K562 (cell line): ENCODE measurements at regions of chr6 and their contacts with region 1.

Region 1: DNA sequence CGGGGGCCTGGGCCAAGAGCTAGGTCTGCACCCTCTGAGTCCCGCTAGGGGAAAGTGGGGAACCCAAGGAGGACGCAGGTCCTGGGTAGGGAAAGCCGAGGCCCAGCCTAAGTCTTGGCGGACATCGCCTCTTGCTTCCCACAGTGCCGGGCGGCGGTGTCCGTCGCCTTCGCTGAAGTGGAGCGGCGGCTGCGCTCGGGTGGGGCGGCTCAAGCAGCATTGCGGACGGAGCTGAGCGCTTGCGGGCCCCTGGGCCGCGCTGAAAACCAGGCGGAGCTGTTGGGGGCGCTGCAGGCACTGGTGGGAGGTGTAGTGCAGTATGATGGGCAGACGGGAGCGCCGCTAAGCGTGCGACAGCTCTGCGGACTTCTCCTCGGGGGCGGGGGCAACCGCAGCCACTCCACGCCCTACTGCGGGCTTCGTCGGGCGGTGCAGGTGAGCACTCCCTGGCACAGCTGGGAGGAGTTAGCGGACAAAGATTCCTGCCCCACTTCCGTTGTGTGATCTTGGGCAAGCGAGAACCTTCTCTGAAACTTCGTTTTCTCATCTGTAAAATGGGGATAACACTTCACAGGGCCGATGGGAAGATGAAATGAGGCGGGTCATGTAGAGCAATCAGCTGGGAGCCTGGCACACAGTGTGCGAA is 4.2 kb downstream of the PRSS16 start:
- DNase-seq: peak; percentile 93 to 97 (median 95)
- ATAC-seq: peak; percentile 94
- H3K4me3 ChIP-seq: peak overlapping the region; percentile 89
- H3K27ac ChIP-seq: peak overlapping the region; percentile 81
- H3K4me1 ChIP-seq: peaks cover 25 to 30% of the 10 kb centered on the region in 2 experiments; a peak in 4 of 5 replicates
- H3K27me3 ChIP-seq: no peaks in the 10 kb centered on the region
- CTCF ChIP-seq: peak; percentile 87 to 98 (median 95)
- EP300 ChIP-seq: peak; percentile 3; the same call in 1 of the 2 replicates
- POLR2A ChIP-seq: peak; percentile 80
- RAD21 ChIP-seq: peak; percentile 71 to 79

Region 2: GRCh38 chr6:27205375-27206278 is 46.1 kb before region 1 on chr6:
- CTCF ChIA-PET with region 1: no interaction called
- POLR2A ChIA-PET with region 1: no interaction called
- in situ Hi-C with region 1: no loop called
- intact Hi-C with region 1: no loop called
- DNase-seq: peak; percentile 44 to 79 (median 66)
- ATAC-seq: peak; percentile 80
- H3K4me3 ChIP-seq: peak overlapping the region; percentile 27
- H3K27ac ChIP-seq: peak overlapping the region; percentile 51
- H3K4me1 ChIP-seq: peaks cover 4 to 8% of the 10 kb centered on the region in 2 experiments; a peak in 3 of 5 replicates
- H3K27me3 ChIP-seq: no peaks in the 10 kb centered on the region
- CTCF ChIP-seq: no peak
- EP300 ChIP-seq: peak; percentile 39; the same call in 1 of the 2 replicates
- POLR2A ChIP-seq: no peak
- RAD21 ChIP-seq: no peak

Region 3: GRCh38 chr6:27332692-27333641 is 81.2 kb after region 1 on chr6:
- CTCF ChIA-PET with region 1: no interaction called
- POLR2A ChIA-PET with region 1: no interaction called
- in situ Hi-C with region 1: no loop called
- intact Hi-C with region 1: loop called (anchors 5 kb)
- DNase-seq: peak; percentile 67 to 91 (median 78)
- ATAC-seq: peak; percentile 92
- H3K4me3 ChIP-seq: peak overlapping the region; percentile 64
- H3K27ac ChIP-seq: peak overlapping the region; percentile 82
- H3K4me1 ChIP-seq: peaks cover 0 to 5% of the 10 kb centered on the region in 2 experiments; a peak in 2 of 5 replicates
- H3K27me3 ChIP-seq: no peaks in the 10 kb centered on the region
- CTCF ChIP-seq: peak in 1 of 3 experiments; percentile 18; a peak in 1 of 6 replicates
- EP300 ChIP-seq: peak; percentile 71
- POLR2A ChIP-seq: no peak
- RAD21 ChIP-seq: no peak; a peak in 2 of 4 replicates

Region 4: GRCh38 chr6:27605401-27606342 is 353.9 kb after region 1 on chr6:
- CTCF ChIA-PET with region 1: no interaction called
- POLR2A ChIA-PET with region 1: no interaction called
- in situ Hi-C with region 1: no loop called
- intact Hi-C with region 1: no loop called
- DNase-seq: peak; percentile 66 to 91 (median 70)
- ATAC-seq: peak; percentile 69
- H3K4me3 ChIP-seq: peak overlapping the region; percentile 60
- H3K27ac ChIP-seq: peak overlapping the region; percentile 54
- H3K4me1 ChIP-seq: peaks cover 6 to 13% of the 10 kb centered on the region in 2 experiments; a peak in 4 of 5 replicates
- H3K27me3 ChIP-seq: no peaks in the 10 kb centered on the region
- CTCF ChIP-seq: no peak
- EP300 ChIP-seq: peak; percentile 84
- POLR2A ChIP-seq: no peak
- RAD21 ChIP-seq: no peak